PC-9 (cell line): ENCODE measurements at regions of chr5 and their contacts with region 1.

Region 1: GRCh38 chr5:56200856-56201666 is 32.1 kb downstream of the ANKRD55 start:
- DNase-seq: peak; percentile 58 to 74
- H3K4me3 ChIP-seq: no peak overlapping the region
- H3K27ac ChIP-seq: no peak overlapping the region
- H3K4me1 ChIP-seq: peaks cover 16% of the 10 kb centered on the region
- H3K27me3 ChIP-seq: no peaks in the 10 kb centered on the region
- CTCF ChIP-seq: peak; percentile 88

Region 2: DNA sequence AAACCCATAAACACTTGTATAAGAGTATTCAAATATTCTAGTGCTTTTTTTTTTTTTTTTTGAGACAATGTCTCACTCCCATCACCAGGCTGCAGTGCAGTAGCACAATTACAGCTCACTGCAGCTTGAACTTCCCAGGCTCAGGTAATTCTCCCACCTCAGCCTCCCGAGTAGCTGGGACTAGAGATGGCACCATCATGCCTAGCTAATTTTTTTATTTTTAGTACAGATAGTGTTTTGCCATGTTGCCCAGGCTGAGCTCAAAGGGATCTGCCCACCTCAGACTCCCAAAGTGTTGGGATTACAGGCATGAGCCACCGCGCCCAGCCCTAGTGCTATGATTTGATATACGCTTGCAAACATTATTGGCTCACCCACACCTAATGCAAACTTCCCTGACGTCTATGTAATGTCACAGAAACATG is 218.1 kb before region 1 on chr5:
- CTCF ChIA-PET with region 1: no interaction called
- POLR2A ChIA-PET with region 1: no interaction called
- intact Hi-C with region 1: loop called (anchors 1 kb)
- DNase-seq: no peak
- H3K4me3 ChIP-seq: no peak overlapping the region
- H3K27ac ChIP-seq: no peak overlapping the region
- H3K4me1 ChIP-seq: no peaks in the 10 kb centered on the region
- H3K27me3 ChIP-seq: no peaks in the 10 kb centered on the region
- CTCF ChIP-seq: peak; percentile 43

Region 3: GRCh38 chr5:56112526-56113121 is 88.4 kb before region 1 on chr5:
- CTCF ChIA-PET with region 1: no interaction called
- POLR2A ChIA-PET with region 1: no interaction called
- intact Hi-C with region 1: loop called (anchors 2 kb)
- DNase-seq: peak; percentile 81 to 98
- H3K4me3 ChIP-seq: no peak overlapping the region
- H3K27ac ChIP-seq: peak overlapping the region; percentile 95
- H3K4me1 ChIP-seq: peaks cover 35% of the 10 kb centered on the region
- H3K27me3 ChIP-seq: no peaks in the 10 kb centered on the region
- CTCF ChIP-seq: no peak

Region 4: GRCh38 chr5:56142620-56143372 is 58.3 kb before region 1 on chr5:
- CTCF ChIA-PET with region 1: no interaction called
- POLR2A ChIA-PET with region 1: no interaction called
- intact Hi-C with region 1: no loop called
- DNase-seq: peak; percentile 96
- H3K4me3 ChIP-seq: no peak overlapping the region
- H3K27ac ChIP-seq: peak overlapping the region; percentile 92
- H3K4me1 ChIP-seq: peaks cover 47% of the 10 kb centered on the region
- H3K27me3 ChIP-seq: no peaks in the 10 kb centered on the region
- CTCF ChIP-seq: no peak